ENCODE measurements at regions of chr1 and their contacts with region 1.

Region 1: GRCh38 chr1:54715493-54716298 is at the start of gene TTC4:
- DNase-seq: peak; percentile 68 to 92 (median 82)
- ATAC-seq: peak; percentile 98
- H3K4me3 ChIP-seq: peak within 1 kb of the TSS; percentile 77 to 95
- H3K4me3 Mint-ChIP-seq: peak within 1 kb of the TSS; percentile 86
- H3K27ac ChIP-seq: peak within 1 kb of the TSS; percentile 59 to 60
- H3K27ac Mint-ChIP-seq: peak within 1 kb of the TSS; percentile 85
- H3K4me1 ChIP-seq: peaks cover 18% of the 10 kb centered on the region
- H3K4me1 Mint-ChIP-seq: peaks cover 33% of the 10 kb centered on the region
- H3K27me3 ChIP-seq: no peaks in the 10 kb centered on the region
- H3K27me3 Mint-ChIP-seq: no peaks in the 10 kb centered on the region
- CTCF ChIP-seq: no peak
- total RNA-seq, gene TTC4: 7.8 to 7.9 TPM

Region 2: DNA sequence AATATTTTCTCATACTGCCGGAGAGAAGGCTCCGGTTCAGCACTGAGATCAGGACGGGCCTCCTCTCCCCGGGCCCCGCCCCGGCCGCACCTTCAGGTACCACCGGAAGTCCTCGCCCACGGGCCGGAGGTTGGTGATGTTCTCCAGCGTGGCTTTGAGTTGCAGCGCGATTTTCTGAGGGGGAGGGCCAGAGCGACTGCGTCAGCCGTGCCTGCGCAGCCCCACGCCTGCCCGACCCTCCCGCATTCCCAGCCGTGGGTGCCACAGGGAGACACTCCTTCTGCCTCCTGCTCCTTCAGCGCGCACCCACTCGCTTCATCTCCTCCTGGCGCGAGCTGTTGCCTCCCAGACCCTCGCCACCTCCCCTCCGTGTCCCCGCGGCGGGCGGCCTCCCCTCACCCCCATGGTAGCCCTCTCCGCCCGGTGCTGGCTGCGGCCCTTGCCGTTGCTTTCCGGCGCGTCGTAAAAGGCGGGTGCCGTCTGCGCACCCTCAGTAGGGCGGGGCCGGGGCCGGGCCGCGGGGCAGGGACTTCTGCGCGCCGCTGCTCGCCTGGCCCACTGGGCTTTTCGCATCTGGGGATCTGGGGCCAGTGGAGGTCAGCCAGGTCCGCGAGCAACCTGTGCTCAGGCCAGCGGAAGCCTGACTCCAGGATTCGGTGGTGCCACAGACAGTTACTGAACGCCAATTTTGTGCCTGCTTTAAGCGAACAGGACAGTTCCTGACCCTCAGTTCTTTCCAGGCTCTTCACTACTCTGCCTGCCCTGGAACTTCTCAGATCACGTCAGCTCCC is 1495.3 kb before region 1 on chr1 and contains the start of gene CZIB:
- CTCF ChIA-PET with region 1: no interaction called
- POLR2A ChIA-PET with region 1: no interaction called
- intact Hi-C with region 1: loop called in 1 of 2 experiments (anchors 10 kb)
- DNase-seq: peak; percentile 83 to 95 (median 92)
- ATAC-seq: peak; percentile 92
- H3K4me3 ChIP-seq: peak within 1 kb of the TSS; percentile 80 to 92
- H3K4me3 Mint-ChIP-seq: peak within 1 kb of the TSS; percentile 94
- H3K27ac ChIP-seq: peak within 1 kb of the TSS; percentile 94
- H3K27ac Mint-ChIP-seq: peak within 1 kb of the TSS; percentile 98
- H3K4me1 ChIP-seq: peaks cover 16% of the 10 kb centered on the region
- H3K4me1 Mint-ChIP-seq: peaks cover 18% of the 10 kb centered on the region
- H3K27me3 ChIP-seq: no peaks in the 10 kb centered on the region
- H3K27me3 Mint-ChIP-seq: no peaks in the 10 kb centered on the region
- CTCF ChIP-seq: no peak
- total RNA-seq, gene CZIB: 26.7 to 27.4 TPM

Region 3: DNA sequence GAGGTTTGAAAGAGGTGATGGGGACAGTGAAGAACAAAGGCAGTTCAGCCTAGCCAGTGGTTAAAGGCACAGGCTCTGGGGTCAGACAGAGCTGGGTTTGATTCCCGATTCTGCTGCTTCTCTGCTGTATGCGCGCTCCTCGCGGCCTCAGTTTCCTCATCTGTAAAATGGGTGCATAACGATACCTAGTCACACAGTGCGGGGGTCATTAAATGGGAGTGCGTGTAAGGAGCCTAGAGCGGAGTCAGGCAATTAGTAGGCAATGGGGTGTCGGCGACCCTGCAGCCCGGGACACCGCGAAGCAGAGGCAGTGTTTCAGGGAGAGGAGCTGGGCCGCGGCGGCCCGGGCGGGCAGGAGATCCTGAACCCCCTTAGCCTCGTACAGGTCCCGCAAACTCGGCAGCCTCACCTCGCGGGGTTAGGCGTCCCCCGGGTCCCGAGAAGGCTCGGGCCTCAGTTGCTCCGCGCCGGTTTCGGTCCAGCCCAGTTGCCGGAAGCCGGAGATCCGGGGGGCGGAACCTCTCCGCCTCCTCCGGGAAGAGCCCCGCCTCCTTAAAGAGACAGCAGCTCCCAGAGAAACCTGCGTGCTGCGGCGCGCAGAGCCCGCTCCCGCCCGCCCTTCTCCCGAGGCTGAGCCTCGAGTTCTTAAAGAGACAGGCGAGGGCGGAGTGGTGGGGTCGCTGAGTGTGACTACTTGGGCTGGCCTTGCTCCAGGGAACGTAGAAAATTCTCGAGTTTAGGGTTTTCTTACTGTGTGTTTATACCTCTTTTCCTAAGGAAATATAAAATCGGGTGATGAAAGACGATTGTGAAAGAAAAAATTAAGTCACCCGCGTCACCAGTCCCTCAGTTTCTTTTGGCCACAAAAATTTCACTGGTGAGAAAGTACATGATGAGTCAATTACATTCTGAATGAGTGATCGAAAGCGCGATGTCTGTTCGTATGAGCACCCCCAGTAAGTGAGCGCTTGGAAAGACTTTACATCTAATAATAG is 826.1 kb before region 1 on chr1 and contains the start of gene YIPF1:
- CTCF ChIA-PET with region 1: no interaction called
- POLR2A ChIA-PET with region 1: no interaction called
- intact Hi-C with region 1: loop called (anchors 5 kb)
- DNase-seq: peak; percentile 68 to 92 (median 86)
- ATAC-seq: peak; percentile 98
- H3K4me3 ChIP-seq: peak within 1 kb of the TSS; percentile 69 to 97
- H3K4me3 Mint-ChIP-seq: peak within 1 kb of the TSS; percentile 94
- H3K27ac ChIP-seq: peak within 1 kb of the TSS; percentile 42 to 56
- H3K27ac Mint-ChIP-seq: peak within 1 kb of the TSS; percentile 94
- H3K4me1 ChIP-seq: peaks cover 19% of the 10 kb centered on the region
- H3K4me1 Mint-ChIP-seq: peaks cover 49% of the 10 kb centered on the region
- H3K27me3 ChIP-seq: no peaks in the 10 kb centered on the region
- H3K27me3 Mint-ChIP-seq: no peaks in the 10 kb centered on the region
- CTCF ChIP-seq: no peak
- total RNA-seq, gene YIPF1: 4.6 to 5.4 TPM

Region 4: GRCh38 chr1:54671985-54672608 is 43.6 kb before region 1 on chr1:
- CTCF ChIA-PET with region 1: interaction called, 6 read pairs
- POLR2A ChIA-PET with region 1: no interaction called
- intact Hi-C with region 1: loop called in 1 of 2 experiments (anchors 1 kb)
- DNase-seq: peak; percentile 39 to 77 (median 63)
- ATAC-seq: peak; percentile 85
- H3K4me3 ChIP-seq: no peak overlapping the region
- H3K4me3 Mint-ChIP-seq: no peak overlapping the region
- H3K27ac ChIP-seq: no peak overlapping the region
- H3K27ac Mint-ChIP-seq: no peak overlapping the region
- H3K4me1 ChIP-seq: no peaks in the 10 kb centered on the region
- H3K4me1 Mint-ChIP-seq: no peaks in the 10 kb centered on the region
- H3K27me3 ChIP-seq: no peaks in the 10 kb centered on the region
- H3K27me3 Mint-ChIP-seq: no peaks in the 10 kb centered on the region
- CTCF ChIP-seq: peak; percentile 69

Region 5: GRCh38 chr1:54800899-54801759 is 85.4 kb after region 1 on chr1 and contains the start of gene TTC22:
- CTCF ChIA-PET with region 1: interaction called, 3 read pairs
- POLR2A ChIA-PET with region 1: no interaction called
- intact Hi-C with region 1: loop called (anchors 1 to 2 kb)
- DNase-seq: peak; percentile 39 to 84 (median 72)
- ATAC-seq: peak; percentile 81
- H3K4me3 ChIP-seq: peak within 1 kb of the TSS; percentile 59 to 79
- H3K4me3 Mint-ChIP-seq: peak within 1 kb of the TSS; percentile 97
- H3K27ac ChIP-seq: peak within 1 kb of the TSS; percentile 38 to 74
- H3K27ac Mint-ChIP-seq: peak within 1 kb of the TSS; percentile 93
- H3K4me1 ChIP-seq: peaks cover 37% of the 10 kb centered on the region
- H3K4me1 Mint-ChIP-seq: peaks cover 58% of the 10 kb centered on the region
- H3K27me3 ChIP-seq: no peaks in the 10 kb centered on the region
- H3K27me3 Mint-ChIP-seq: no peaks in the 10 kb centered on the region
- CTCF ChIP-seq: peak; percentile 54
- total RNA-seq, gene TTC22: 3.1 to 4.2 TPM

Region 6: DNA sequence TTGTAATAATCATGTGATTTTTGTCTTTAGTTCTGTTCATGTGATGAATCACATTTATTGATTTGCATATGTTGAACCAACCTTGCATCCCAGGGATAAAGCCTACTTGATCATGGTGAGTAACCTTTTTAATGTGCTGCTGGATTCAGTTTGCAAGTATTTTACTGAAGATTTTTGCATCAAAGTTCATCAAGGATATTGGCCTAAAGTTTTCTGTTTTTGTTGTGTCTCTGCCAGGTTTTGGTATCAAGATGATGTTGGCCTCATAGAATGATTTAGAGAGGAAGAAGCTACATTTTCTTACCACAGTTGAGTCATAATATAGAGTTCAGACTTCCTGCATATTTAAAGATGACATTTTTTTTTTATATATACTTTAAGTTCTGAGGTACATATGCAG is 1407.7 kb after region 1 on chr1:
- CTCF ChIA-PET with region 1: no interaction called
- POLR2A ChIA-PET with region 1: no interaction called
- intact Hi-C with region 1: no loop called
- DNase-seq: no peak
- ATAC-seq: no peak
- H3K4me3 ChIP-seq: no peak overlapping the region
- H3K4me3 Mint-ChIP-seq: no peak overlapping the region
- H3K27ac ChIP-seq: no peak overlapping the region
- H3K27ac Mint-ChIP-seq: no peak overlapping the region
- H3K4me1 ChIP-seq: no peaks in the 10 kb centered on the region
- H3K4me1 Mint-ChIP-seq: no peaks in the 10 kb centered on the region
- H3K27me3 ChIP-seq: no peaks in the 10 kb centered on the region
- H3K27me3 Mint-ChIP-seq: no peaks in the 10 kb centered on the region
- CTCF ChIP-seq: no peak

Measured in CD8-positive, alpha-beta T cell (primary cell).